CD14-positive monocyte (primary cell): ENCODE measurements at regions of chr16 and their contacts with region 1.

Region 1: DNA sequence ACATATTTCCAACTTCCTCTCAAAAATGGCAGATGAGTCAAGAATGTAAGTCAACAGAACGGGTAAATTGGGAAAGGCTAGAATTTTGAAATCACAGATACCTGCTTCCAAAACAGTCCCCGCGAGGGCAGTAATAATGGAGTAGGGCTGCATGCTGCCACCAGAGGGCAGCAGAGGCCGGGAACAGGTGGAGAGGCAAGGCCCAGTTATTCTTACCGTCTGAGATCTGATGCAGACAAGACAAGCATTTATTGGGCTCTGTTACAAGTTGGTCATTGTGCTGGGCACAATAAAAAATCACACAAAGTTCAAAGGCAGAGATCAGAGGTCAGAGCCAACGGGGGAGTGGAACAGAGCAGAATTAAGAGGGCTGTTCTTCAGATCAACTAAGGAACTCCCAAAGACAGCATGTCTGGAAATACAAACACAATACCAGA is 8.8 kb upstream of the MLKL start:
- DNase-seq: peak; percentile 80 to 92 (median 90)
- H3K4me3 ChIP-seq: no peak overlapping the region
- H3K4me3 Mint-ChIP-seq: peak overlapping the region in 1 of 2 donors; percentile 21
- H3K27ac ChIP-seq: peak overlapping the region in 1 of 2 donors; percentile 30
- H3K27ac Mint-ChIP-seq: peak overlapping the region; percentile 17 to 85 (median 68)
- H3K4me1 ChIP-seq: peaks cover 16 to 24% of the 10 kb centered on the region in 2 donors
- H3K4me1 Mint-ChIP-seq: peaks cover 24% of the 10 kb centered on the region
- H3K27me3 ChIP-seq: no peaks in the 10 kb centered on the region
- H3K27me3 Mint-ChIP-seq: peaks cover 0 to 1% (median 0%) of the 10 kb centered on the region in 3 donors
- CTCF ChIP-seq: peak; percentile 97

Region 2: GRCh38 chr16:74626741-74627416 is 82.6 kb before region 1 on chr16:
- intact Hi-C with region 1: no loop called
- DNase-seq: no peak
- H3K4me3 ChIP-seq: no peak overlapping the region
- H3K4me3 Mint-ChIP-seq: no peak overlapping the region
- H3K27ac ChIP-seq: no peak overlapping the region
- H3K27ac Mint-ChIP-seq: peak overlapping the region in 1 of 7 donors; percentile 17
- H3K4me1 ChIP-seq: no peaks in the 10 kb centered on the region
- H3K4me1 Mint-ChIP-seq: no peaks in the 10 kb centered on the region
- H3K27me3 ChIP-seq: no peaks in the 10 kb centered on the region
- H3K27me3 Mint-ChIP-seq: no peaks in the 10 kb centered on the region
- CTCF ChIP-seq: no peak

Region 3: DNA sequence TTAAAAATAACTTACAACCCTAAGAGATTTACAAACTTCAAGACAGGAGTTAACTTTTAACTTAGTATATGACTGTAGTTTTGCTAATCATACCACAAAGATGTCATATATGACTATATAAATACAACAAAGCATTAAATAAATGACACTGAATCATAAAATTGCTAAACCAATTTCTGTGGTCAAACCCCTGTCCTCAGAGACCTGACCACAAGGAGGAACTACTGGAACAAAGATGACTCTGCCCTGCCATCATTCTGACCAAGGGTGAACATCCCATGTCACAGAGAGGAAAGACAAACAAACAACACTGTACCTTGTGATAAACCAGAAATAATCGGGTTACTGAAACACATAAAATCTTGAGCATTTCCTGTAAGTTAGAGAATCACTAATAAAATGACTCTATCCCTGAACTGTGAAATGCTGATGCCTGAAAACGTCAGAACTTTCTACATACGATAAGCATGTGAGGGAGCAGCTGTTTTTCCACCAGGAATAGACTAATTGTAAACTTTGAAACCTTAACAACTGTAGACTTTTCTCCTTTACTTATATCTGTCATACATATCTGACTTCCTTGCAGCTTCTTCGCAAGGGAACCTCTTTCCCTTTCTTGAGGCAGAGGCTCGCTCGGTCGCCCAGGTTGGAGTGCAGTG is 227.6 kb after region 1 on chr16:
- intact Hi-C with region 1: loop called in 1 of 2 experiments (anchors 10 kb)
- DNase-seq: peak; percentile 82 to 84 (median 83)
- H3K4me3 ChIP-seq: no peak overlapping the region
- H3K4me3 Mint-ChIP-seq: peak overlapping the region; percentile 12 to 75
- H3K27ac ChIP-seq: peak overlapping the region in 1 of 2 donors; percentile 73
- H3K27ac Mint-ChIP-seq: peak overlapping the region; percentile 74 to 93 (median 91)
- H3K4me1 ChIP-seq: peaks cover 12 to 15% of the 10 kb centered on the region in 2 donors
- H3K4me1 Mint-ChIP-seq: peaks cover 14% of the 10 kb centered on the region
- H3K27me3 ChIP-seq: peaks cover 5 to 16% of the 10 kb centered on the region in 2 donors
- H3K27me3 Mint-ChIP-seq: peaks cover 28 to 34% (median 32%) of the 10 kb centered on the region in 3 donors
- CTCF ChIP-seq: no peak

Region 4: DNA sequence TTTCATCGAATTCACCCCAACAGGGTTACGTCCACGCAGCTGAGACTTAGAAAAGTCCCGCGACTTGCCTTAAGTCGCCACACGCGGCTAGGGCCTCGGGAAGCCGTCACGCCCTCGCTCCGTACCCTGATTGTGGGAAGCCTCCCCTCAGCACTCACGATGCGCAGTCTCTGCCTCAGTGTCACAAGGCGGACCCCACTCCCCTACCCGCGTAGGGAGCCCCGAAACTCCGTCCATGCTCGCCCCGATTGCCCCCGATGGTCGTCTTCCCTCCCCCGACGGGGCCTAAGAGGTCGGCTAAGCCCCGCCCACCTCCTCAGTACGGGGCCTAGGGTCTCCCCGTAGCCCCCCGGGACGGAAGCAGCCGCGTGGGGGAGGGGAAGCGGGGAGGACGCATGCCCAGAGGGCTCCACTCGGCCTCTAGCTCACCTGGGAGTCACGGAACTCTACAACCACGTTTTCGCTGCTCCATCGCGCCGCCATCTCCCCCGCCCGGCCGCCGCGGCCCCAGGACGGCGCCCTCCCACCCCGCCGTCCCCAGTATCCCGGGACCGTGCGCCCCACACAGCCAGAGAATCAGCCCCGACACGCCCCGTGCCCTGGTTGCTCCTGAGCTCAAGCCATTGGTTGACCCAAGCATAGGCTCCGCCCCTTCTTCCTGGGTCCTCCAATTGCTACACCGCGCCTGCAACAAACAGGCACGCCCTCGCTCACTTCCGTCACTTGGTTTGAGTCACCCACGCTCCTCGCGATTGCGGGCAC is 275.3 kb after region 1 on chr16 and contains the start of gene WDR59:
- intact Hi-C with region 1: loop called in 1 of 2 experiments (anchors 10 kb)
- DNase-seq: peak; percentile 99 to 100 (median 99)
- H3K4me3 ChIP-seq: peak within 1 kb of the TSS; percentile 88 to 100 (median 97)
- H3K4me3 Mint-ChIP-seq: peak within 1 kb of the TSS; percentile 86 to 89
- H3K27ac ChIP-seq: peak within 1 kb of the TSS; percentile 35 to 91
- H3K27ac Mint-ChIP-seq: peak within 1 kb of the TSS; percentile 57 to 91 (median 77)
- H3K4me1 ChIP-seq: peaks cover 5 to 8% of the 10 kb centered on the region in 2 donors
- H3K4me1 Mint-ChIP-seq: peaks cover 11% of the 10 kb centered on the region
- H3K27me3 ChIP-seq: no peaks in the 10 kb centered on the region
- H3K27me3 Mint-ChIP-seq: peaks cover 0 to 2% (median 1%) of the 10 kb centered on the region in 3 donors
- CTCF ChIP-seq: no peak
- polyA plus RNA-seq, gene WDR59: 6.7 to 44.4 (median 7.8) TPM